ENCODE measurements at regions of chr12 and their contacts with region 1.

Region 1: GRCh38 chr12:131675126-131676080 is 35.5 kb upstream of the SFSWAP start:
- DNase-seq: no peak
- H3K4me3 ChIP-seq: no peak overlapping the region
- H3K27ac ChIP-seq: no peak overlapping the region
- H3K4me1 ChIP-seq: no peaks in the 10 kb centered on the region
- H3K27me3 ChIP-seq: peaks cover 2% of the 10 kb centered on the region
- CTCF ChIP-seq: no peak

Region 2: DNA sequence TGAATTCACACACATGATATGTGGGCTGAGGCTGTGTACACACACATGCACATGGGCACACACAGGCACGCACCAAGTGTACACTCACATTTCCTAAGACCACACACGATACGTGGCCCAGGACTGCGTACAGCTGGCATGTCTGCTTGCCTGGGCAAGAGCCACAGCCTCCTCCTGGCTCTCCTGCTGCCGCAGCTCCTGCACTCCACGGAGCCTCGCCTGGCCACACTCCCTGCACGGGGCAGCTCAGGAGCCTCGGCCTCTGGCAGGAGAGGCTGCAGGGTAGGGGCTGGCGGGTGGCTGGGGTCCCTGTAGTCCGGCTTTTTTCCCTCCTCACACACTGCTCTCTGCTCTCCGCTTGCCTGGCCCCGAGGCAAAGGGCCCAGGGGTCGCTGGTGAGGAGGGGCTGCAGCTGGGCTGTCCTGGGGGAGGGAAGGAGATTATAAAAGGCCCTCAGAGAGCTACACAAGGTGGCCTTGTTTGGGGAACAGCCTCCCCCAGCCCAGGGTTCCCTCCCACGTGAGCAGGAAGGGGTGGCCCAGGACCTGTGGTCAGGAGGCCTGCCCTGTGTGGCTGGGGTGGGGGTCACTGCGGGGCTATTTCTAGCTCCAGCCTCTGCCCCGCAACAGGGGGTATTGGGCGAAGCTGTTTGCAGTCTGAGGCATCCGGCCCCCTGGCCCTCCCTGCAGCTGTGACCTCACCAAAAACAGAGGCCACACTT is 53.5 kb before region 1 on chr12:
- CTCF ChIA-PET with region 1: no interaction called
- dilution Hi-C with region 1: no loop called
- in situ Hi-C with region 1: no loop called
- intact Hi-C with region 1: no loop called
- DNase-seq: no peak
- H3K4me3 ChIP-seq: no peak overlapping the region
- H3K27ac ChIP-seq: no peak overlapping the region
- H3K4me1 ChIP-seq: no peaks in the 10 kb centered on the region
- H3K27me3 ChIP-seq: no peaks in the 10 kb centered on the region
- CTCF ChIP-seq: no peak

Region 3: GRCh38 chr12:131720921-131721320 is 45.5 kb after region 1 on chr12:
- CTCF ChIA-PET with region 1: no interaction called
- dilution Hi-C with region 1: no loop called
- in situ Hi-C with region 1: no loop called
- intact Hi-C with region 1: loop called (anchors 2 kb)
- DNase-seq: peak; percentile 79
- H3K4me3 ChIP-seq: no peak overlapping the region
- H3K27ac ChIP-seq: peak overlapping the region; percentile 44
- H3K4me1 ChIP-seq: peaks cover 3% of the 10 kb centered on the region
- H3K27me3 ChIP-seq: no peaks in the 10 kb centered on the region
- CTCF ChIP-seq: no peak

Region 4: GRCh38 chr12:131735476-131736445 is 60.4 kb after region 1 on chr12:
- CTCF ChIA-PET with region 1: no interaction called
- dilution Hi-C with region 1: no loop called
- in situ Hi-C with region 1: no loop called
- intact Hi-C with region 1: no loop called
- DNase-seq: no peak
- H3K4me3 ChIP-seq: no peak overlapping the region
- H3K27ac ChIP-seq: no peak overlapping the region
- H3K4me1 ChIP-seq: peaks cover 17% of the 10 kb centered on the region
- H3K27me3 ChIP-seq: no peaks in the 10 kb centered on the region
- CTCF ChIP-seq: no peak